HEK293T (cell line): ENCODE measurements at regions of chr9 and their contacts with region 1.

Region 1: GRCh38 chr9:35161713-35162604 is at the start of gene UNC13B:
- DNase-seq: peak; percentile 97

Region 2: GRCh38 chr9:35172878-35173277 is 10.9 kb after region 1 on chr9:
- CTCF ChIA-PET with region 1: no interaction called
- POLR2A ChIA-PET with region 1: interaction called, 13 read pairs
- DNase-seq: peak; percentile 7

Region 3: GRCh38 chr9:35277628-35278359 is 115.8 kb after region 1 on chr9:
- CTCF ChIA-PET with region 1: no interaction called
- POLR2A ChIA-PET with region 1: no interaction called
- DNase-seq: no peak